ENCODE measurements at regions of chr12 and their contacts with region 1.

Region 1: GRCh38 chr12:121917979-121918678 is at the start of gene CFAP251:
- DNase-seq: peak; percentile 96 to 97
- H3K4me3 ChIP-seq: peak within 1 kb of the TSS; percentile 48 to 61
- H3K27ac ChIP-seq: peak within 1 kb of the TSS; percentile 69 to 78
- H3K4me1 ChIP-seq: peaks cover 0 to 14% (median 11%) of the 10 kb centered on the region in 4 donors
- H3K27me3 ChIP-seq: no peaks in the 10 kb centered on the region
- CTCF ChIP-seq: peak; percentile 76 to 92

Region 2: DNA sequence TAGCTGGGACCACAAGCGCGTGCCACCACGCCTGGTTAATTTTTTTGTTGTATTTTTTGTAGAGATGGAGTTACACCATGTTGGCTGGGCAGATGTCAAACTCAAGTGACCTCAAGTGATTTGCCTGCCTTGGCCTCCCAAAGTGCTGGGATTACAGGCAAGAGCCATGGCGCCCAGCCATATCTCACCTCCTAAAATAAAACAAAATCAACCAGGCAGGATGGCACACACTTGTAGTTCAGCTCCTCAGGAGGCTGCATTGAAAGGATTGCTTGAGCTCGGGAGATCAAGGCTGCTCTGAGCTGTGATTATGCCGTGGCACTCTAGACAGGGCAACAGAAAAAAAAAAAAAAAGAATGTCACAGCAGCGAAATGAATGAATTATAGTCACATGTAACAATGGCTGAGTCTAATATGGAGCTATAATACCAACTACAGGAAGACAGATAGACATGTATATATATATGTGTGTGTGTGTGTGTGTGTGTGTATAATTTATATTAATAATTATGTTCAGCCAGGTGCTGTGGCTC is 224.9 kb before region 1 on chr12:
- intact Hi-C with region 1: no loop called
- DNase-seq: no peak
- H3K4me3 ChIP-seq: no peak overlapping the region
- H3K27ac ChIP-seq: no peak overlapping the region
- H3K4me1 ChIP-seq: no peaks in the 10 kb centered on the region
- H3K27me3 ChIP-seq: peaks cover 0 to 2% of the 10 kb centered on the region in 2 donors
- CTCF ChIP-seq: no peak

Region 3: GRCh38 chr12:122003651-122004611 is 85.8 kb after region 1 on chr12:
- intact Hi-C with region 1: no loop called
- DNase-seq: no peak
- H3K4me3 ChIP-seq: peak overlapping the region in 1 of 2 donors; percentile 12
- H3K27ac ChIP-seq: peak overlapping the region; percentile 66 to 80
- H3K4me1 ChIP-seq: peaks cover 0 to 24% (median 13%) of the 10 kb centered on the region in 4 donors
- H3K27me3 ChIP-seq: no peaks in the 10 kb centered on the region
- CTCF ChIP-seq: no peak

Region 4: GRCh38 chr12:122021822-122022526 is 103.8 kb after region 1 on chr12 and contains the start of gene BCL7A:
- intact Hi-C with region 1: loop called (anchors 5 kb)
- DNase-seq: peak; percentile 56 to 81
- H3K4me3 ChIP-seq: peak within 1 kb of the TSS; percentile 70 to 82
- H3K27ac ChIP-seq: peak within 1 kb of the TSS; percentile 90 to 98
- H3K4me1 ChIP-seq: peaks cover 0 to 46% (median 27%) of the 10 kb centered on the region in 4 donors
- H3K27me3 ChIP-seq: no peaks in the 10 kb centered on the region
- CTCF ChIP-seq: peak in 1 of 2 experiments; percentile 7

Region 5: DNA sequence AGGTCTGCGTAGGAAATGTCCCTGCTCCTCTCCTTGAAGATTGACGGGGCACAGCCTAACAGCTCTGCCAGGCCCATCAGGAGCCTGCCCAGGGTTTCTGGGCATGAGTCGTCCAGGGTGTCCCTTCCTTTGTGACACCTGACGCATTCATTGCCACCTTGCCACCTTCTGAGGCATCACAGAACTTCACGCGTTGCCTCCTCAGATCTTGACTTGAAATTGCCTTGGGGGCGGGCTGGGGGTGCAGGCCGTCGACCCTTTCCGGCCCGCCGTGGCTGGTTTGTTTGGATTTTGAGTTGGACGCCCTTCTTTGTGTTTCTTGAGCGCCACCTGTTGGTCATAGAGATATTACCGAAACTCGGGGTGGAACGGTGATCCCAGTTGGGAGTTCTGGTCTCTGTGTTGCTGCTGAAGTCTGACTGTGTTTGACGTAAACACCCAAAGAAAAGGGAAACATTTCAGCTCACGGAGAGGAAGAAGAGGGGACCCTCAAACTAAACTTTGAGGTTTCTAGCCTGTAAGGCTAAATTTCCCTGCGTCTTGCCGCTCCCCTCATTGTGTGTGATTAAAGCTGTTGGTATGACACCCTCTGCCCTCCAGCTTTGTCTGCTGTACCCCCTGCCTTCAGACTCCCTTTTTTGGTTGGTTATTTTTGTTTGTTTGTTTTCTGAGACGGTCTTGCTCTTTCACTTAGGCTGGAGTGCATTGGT is 205.1 kb after region 1 on chr12:
- intact Hi-C with region 1: loop called (anchors 5 kb)
- DNase-seq: peak in 1 of 2 donors; percentile 69
- H3K4me3 ChIP-seq: no peak overlapping the region
- H3K27ac ChIP-seq: no peak overlapping the region
- H3K4me1 ChIP-seq: peaks cover 0 to 34% (median 20%) of the 10 kb centered on the region in 4 donors
- H3K27me3 ChIP-seq: no peaks in the 10 kb centered on the region
- CTCF ChIP-seq: peak; percentile 70 to 90

Measured in tibial artery (tissue), 4 donors.